ENCODE measurements at regions of chr6 and their contacts with region 1.

Region 1: DNA sequence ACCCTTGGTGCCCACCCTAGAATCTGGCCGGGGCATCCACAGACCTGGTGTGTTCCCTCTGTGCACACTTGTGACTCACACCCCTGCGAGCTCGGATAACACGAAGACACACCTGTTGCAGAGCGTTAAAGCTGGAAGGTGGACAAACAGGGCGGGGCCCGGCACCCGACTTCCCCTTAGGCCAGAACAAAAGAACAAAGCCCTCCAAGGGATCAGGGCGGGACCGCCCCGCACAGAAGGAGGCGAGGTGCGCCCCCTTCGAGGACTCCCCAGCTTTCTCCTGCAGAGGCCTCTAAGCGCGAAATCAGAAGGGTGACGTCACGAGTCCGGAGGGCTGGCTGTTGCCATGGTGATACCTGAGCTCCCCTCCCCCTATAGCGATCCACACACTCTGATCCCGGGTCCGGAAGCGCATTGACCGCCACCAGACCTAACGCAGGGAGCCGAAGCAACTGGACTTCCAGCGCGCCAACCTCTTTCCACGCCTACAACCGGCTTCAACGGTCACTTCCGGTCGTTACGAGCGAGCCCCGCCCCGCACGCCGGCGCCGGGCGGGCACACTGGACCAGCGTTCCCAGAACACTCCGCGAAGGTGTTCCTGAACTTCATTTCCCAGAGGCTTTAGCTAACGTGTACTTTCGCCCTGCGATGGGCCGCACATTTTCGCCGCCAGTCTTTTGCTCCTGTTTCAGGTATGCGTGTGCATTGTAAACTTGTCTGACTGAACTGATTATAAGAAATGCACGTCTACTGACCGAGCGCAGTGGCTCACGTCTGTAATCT is at the start of gene ZNF184:
- DNase-seq: peak; percentile 96
- H3K4me3 ChIP-seq: peak within 1 kb of the TSS; percentile 63 to 80
- H3K27ac ChIP-seq: peak within 1 kb of the TSS; percentile 92 to 94
- H3K4me1 ChIP-seq: no peaks in the 10 kb centered on the region
- H3K27me3 ChIP-seq: no peaks in the 10 kb centered on the region
- CTCF ChIP-seq: peak in 3 of 4 experiments; percentile 4 to 19 (median 9)
- POLR2A ChIP-seq: peak; percentile 70
- total RNA-seq, gene ZNF184: 6.2 to 8.2 TPM

Region 2: GRCh38 chr6:26383624-26384417 is 1089.0 kb before region 1 on chr6:
- intact Hi-C with region 1: no loop called
- DNase-seq: peak; percentile 16
- H3K4me3 ChIP-seq: peak overlapping the region; percentile 50 to 58
- H3K27ac ChIP-seq: peak overlapping the region; percentile 82 to 84
- H3K4me1 ChIP-seq: no peaks in the 10 kb centered on the region
- H3K27me3 ChIP-seq: no peaks in the 10 kb centered on the region
- CTCF ChIP-seq: no peak
- POLR2A ChIP-seq: peak; percentile 20

Region 3: DNA sequence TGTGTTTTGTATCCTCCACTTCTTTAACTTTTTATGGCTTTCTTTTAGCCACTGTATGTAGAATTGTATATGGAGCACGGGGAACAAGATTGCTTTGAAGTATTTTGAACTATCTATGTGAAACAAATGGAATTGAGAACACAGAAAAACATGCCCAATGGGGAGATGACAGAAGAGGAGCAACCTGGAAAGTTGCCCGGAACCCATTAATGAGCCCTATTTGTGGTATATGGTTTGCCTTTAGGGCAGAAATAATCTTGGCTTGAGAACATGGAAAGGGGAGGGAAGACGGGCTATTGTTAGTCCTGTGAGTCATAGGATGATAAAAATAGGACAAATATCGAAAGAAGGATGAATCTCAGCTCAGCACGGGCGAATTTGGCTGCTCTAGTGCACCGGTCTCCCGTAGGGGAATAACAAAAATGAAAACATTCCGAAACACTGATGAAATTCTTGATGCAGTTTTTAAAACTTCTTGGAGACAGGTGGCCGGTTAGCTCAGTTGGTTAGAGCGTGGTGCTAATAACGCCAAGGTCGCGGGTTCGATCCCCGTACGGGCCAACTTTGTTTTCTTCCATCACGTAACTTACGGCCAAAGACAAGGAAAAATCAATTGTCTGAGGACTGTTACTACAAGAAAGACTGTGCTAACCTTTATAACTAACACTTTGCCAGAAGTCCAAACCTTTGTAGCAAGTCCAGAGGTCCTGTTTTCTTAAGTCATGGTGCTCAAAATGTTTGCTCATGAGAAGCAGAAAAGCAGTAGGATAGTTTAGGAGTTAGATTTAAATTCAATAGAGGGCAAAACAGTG is 919.0 kb before region 1 on chr6:
- intact Hi-C with region 1: loop called (anchors 10 kb)
- DNase-seq: peak; percentile 70
- H3K4me3 ChIP-seq: peak overlapping the region; percentile 30 to 31
- H3K27ac ChIP-seq: peak overlapping the region; percentile 61 to 71
- H3K4me1 ChIP-seq: no peaks in the 10 kb centered on the region
- H3K27me3 ChIP-seq: no peaks in the 10 kb centered on the region
- CTCF ChIP-seq: no peak
- POLR2A ChIP-seq: no peak

Region 4: DNA sequence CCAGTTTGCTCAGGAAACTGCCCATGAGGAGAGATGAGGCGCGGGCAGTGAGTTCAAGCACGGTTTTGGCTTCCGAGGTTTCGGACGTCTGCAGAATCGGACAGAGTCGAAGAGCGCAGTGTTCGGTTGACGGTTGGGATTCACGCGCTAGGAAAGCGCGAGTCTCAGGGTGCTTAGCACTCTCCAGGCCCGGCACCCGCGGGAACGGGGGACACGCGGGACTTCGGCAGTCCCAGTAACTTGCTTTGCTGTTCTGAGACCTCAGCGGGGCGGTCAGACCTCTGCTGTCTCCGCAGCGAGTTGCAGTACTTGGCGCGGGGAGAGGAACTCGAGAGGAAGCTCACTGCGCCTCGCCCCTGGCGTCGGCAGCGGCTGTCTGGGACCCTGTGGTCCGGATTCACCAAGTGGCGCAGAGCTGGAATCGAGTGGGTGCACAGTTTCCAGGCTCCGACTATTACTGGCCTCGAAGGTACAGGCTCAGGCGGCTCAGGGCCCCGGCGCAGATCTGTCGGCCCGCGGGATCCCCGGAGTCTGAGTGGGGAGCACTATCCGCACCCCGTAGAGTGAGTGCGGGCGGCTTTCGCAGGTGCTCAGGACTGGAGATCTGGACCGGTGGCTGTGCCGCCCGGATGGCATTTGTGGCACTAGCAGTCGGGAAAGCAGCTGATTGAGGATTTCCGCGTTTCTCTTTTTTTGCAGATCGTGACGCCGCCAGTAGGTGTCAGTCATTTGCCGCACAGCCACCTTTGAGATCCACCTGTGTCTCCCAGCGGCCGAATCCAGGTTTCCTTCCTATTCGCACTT is 160.5 kb before region 1 on chr6 and contains the start of gene POM121L2:
- intact Hi-C with region 1: no loop called
- DNase-seq: peak; percentile 73
- H3K4me3 ChIP-seq: peak within 1 kb of the TSS; percentile 31 to 33
- H3K27ac ChIP-seq: no peak within 1 kb of the TSS
- H3K4me1 ChIP-seq: no peaks in the 10 kb centered on the region
- H3K27me3 ChIP-seq: peaks cover 3% of the 10 kb centered on the region
- CTCF ChIP-seq: peak; percentile 26 to 69 (median 59)
- POLR2A ChIP-seq: no peak
- total RNA-seq, gene POM121L2: 0.62 TPM in 1 of 2 donors, not detected in the other

Measured in prostate gland (tissue), 2 donors.